ENCODE measurements at regions of chr10 and their contacts with region 1.

Region 1: DNA sequence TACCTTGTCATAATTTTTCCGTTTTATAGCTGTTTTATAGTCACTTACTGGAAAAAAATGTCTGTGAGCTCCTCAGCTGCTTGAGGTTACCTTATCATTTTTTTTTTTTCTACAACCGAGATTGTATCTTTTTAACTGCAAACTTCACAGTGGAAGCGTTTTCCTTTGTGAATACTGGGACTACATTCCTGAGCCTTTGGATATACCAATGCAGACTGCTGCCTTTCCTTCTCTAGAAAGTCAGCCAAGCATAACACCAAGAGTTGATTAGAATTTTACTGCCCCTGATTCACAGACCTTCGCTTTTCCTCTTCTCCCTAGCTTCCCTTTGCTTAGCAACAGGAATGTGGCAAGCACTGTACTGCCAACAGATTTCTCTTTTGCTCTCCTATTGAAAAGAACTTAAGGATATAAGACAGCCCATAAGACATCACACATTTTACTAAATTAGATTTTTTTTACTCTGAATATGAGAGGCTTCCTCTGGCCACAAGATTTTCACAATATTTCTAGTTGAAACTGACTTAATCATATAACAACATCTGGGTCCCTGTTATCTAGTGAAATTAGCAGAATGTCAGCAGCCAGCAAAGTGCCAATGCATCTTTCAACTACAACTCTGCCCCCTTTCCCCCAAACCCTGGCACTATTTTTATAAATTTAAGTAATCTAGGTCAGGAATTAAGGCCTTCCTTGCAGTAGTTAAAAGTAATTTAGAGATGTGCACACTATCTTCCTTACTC is 170.6 kb downstream of the PRKG1 start:
- DNase-seq: no peak
- ATAC-seq: peak; percentile 86

Region 2: DNA sequence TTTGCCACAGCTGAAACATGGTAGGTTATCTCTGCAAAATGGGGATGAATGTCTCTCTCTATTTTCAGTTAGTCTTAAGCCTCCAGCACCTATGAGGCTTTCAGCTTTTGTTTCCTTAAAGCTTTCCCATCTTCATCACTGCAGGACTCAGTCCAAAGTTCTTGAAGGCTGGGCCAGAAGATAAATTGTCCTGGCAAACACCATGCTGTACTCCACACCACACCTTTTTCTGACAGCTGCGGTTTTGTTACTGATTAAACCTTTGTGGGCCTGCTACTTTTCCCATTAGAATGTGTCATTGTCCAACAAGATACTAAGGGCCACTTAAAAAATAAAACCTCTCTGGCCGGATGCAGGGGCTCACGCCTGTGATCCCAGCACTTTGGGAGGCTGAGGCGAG is 272.3 kb before region 1 on chr10:
- intact Hi-C with region 1: no loop called
- DNase-seq: no peak
- ATAC-seq: peak; percentile 52

Region 3: DNA sequence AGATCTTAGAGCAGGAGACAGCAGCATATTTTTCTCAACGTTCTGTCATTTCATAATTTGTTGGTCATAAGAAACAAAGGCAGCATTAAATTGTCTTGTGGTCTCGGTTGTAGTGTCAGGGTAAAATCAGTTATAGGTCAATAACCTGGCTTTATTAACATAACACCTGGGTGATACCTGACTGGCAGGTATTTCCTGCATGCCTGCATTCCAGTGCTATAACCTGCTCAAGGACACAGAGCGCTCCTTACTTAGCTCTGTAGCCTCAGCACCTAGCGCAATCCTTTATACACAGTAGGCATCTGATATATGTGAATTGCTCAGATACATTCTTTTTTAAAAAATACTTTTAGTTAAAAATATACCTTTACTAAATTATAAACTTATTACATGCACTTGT is 209.6 kb before region 1 on chr10:
- intact Hi-C with region 1: no loop called
- DNase-seq: no peak
- ATAC-seq: no peak

Region 4: DNA sequence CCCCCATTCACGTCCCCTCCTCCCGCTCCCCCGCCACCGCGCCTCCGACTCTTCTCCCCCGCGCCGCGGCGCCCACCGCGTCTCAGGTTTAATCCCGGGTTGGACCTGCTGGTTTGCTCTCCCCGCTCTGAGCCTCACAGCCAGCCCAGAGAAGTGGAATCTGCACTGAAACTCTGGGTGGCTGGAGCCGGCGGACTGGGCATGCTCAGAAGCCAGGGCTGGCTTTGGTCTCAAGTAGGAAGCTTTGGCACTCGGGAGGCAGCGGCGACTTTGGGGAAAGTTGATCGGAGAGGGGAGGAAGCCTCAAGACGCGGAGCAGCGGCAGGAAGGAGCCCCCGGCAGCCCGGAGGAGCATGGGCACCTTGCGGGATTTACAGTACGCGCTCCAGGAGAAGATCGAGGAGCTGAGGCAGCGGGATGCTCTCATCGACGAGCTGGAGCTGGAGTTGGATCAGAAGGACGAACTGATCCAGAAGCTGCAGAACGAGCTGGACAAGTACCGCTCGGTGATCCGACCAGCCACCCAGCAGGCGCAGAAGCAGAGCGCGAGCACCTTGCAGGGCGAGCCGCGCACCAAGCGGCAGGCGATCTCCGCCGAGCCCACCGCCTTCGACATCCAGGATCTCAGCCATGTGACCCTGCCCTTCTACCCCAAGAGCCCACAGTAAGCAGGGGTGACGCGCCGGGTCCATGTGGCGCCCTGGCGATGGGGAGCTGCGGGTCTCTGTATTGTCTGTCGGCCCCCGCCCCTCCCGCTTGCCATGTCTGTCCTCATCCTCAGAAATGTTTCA is 170.5 kb before region 1 on chr10 and contains the start of gene PRKG1:
- intact Hi-C with region 1: loop called (anchors 10 kb)
- DNase-seq: peak; percentile 88
- ATAC-seq: peak; percentile 95
- total RNA-seq, gene PRKG1: 28.2 TPM

Measured in Right ventricle myocardium superior (tissue), 1 donor.